ENCODE measurements at regions of chr12 and their contacts with region 1.

Region 1: DNA sequence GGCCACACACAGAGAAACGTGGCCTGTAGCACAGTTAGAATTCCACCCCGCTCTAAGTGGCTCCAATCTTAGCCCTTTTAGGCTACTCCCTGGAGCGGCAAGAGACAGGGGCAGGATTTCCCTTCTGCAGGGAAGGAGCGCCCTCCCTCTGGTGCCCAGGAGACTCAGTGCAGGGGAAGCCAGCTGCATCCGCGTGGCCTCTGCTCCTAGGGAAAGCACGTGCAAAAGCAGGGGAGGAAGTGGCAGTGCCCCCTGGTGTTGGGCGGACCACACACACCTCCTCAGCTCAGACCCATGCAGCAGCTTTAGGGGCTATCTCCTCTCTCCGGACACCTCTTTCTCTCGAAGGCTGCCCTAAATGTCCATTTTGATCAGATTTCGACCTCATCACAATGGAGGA is 50.0 kb downstream of the SPRING1 start:
- DNase-seq: peak; percentile 46
- CTCF ChIP-seq: peak; percentile 25

Region 2: DNA sequence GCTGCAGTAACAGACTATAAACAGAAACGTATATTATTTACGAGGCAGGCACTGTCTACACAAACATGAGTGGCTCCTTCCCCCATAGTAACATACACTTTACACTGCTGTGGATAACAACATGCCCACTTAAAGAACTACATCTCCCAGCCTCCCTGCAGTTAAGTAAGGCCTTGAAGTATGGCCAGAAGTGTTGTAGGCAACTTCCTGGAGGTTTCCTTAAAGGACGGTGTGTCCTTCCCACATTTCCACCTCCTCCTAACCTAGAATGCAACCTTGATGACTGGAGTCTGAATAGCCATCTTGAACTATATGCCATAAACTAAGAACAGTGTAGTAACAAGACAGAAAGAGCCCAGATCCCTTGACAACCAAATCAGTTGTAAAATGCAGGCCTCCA is 430.7 kb before region 1 on chr12:
- CTCF ChIA-PET with region 1: no interaction called
- POLR2A ChIA-PET with region 1: no interaction called
- DNase-seq: no peak
- CTCF ChIP-seq: no peak

Region 3: DNA sequence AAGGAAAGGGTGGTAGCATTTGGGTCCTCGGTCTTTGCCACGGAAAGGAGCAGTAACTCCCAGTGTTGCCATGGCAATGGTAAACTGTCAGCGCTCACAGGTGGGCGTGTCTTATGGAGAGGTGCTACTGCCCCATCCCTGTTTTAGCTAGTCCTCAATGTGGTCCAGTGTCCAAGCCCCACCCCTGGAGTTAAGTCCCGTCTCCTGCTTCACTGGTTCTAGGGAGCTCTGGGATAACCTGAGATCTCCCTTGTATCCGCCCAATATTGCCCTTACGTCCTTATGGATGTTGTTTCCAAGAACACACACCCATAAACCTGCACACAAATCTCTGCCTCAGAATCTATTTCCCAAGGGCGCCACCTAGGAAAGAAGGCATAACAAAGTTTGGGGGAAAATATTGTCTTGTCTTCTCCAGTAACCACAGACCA is 14.2 kb before region 1 on chr12:
- CTCF ChIA-PET with region 1: interaction called, 13 read pairs
- POLR2A ChIA-PET with region 1: no interaction called
- DNase-seq: no peak
- CTCF ChIP-seq: peak; percentile 30